A549 (cell line): ENCODE measurements at regions of chr4 and their contacts with region 1.

Region 1: GRCh38 chr4:40897557-40898203 is 147.9 kb downstream of the NSUN7 start:
- DNase-seq: peak; percentile 71 to 79
- ATAC-seq: peak; percentile 79 to 94
- H3K4me3 ChIP-seq: peak overlapping the region; percentile 47
- H3K27ac ChIP-seq: peak overlapping the region; percentile 49 to 52
- H3K4me1 ChIP-seq: 0 out of 3 replicates have a peak, but pooled peaks cover 4% of the 10 kb centered on the region
- CTCF ChIP-seq: peak; percentile 72
- EP300 ChIP-seq: no peak
- POLR2A ChIP-seq: no peak
- RAD21 ChIP-seq: peak; percentile 49 to 55; a peak in 4 of 5 replicates

Region 2: GRCh38 chr4:40736910-40737309 is 160.8 kb before region 1 on chr4:
- CTCF ChIA-PET with region 1: interaction called, 13 read pairs
- POLR2A ChIA-PET with region 1: interaction called, 3 read pairs
- DNase-seq: peak; percentile 22 to 42
- ATAC-seq: peak; percentile 50 to 63; a peak in 2 of 6 replicates
- H3K4me3 ChIP-seq: no peak overlapping the region
- H3K27ac ChIP-seq: no peak overlapping the region
- H3K4me1 ChIP-seq: 0 out of 3 replicates have a peak, but pooled peaks cover under 1% of the 10 kb centered on the region
- CTCF ChIP-seq: peak; percentile 57
- EP300 ChIP-seq: no peak
- POLR2A ChIP-seq: no peak
- RAD21 ChIP-seq: peak; percentile 65 to 68

Region 3: DNA sequence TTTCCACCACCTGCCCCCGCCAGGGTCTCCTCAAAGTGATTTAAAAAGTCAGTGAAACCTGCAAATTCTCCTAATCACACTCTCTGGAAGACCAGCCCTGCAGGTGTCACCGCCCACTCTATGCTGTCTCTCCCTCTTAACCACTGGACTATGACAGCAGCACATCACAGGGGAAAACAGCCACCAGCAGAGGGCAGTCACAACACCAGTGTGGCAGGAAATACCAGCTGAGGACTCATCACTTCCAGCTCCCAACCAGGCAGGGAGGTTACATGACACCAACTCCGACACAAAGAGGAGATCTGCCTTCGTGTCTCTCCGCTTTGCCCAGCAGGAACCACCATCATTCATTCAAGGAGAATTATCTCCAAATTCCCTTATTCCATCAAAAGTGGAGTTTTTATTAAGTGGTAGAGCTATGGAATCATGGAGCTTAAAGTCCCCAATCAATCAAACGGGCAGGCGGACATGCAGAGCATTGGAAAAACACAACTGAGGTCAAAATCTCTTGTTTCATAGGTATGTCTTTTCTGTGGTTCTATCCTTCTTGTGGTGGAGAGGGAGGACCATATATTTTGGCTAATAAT is 56.6 kb before region 1 on chr4:
- CTCF ChIA-PET with region 1: interaction called, 20 read pairs
- POLR2A ChIA-PET with region 1: no interaction called
- DNase-seq: peak; percentile 33 to 78
- ATAC-seq: peak; percentile 93 to 97
- H3K4me3 ChIP-seq: no peak overlapping the region
- H3K27ac ChIP-seq: no peak overlapping the region
- H3K4me1 ChIP-seq: no peaks in the 10 kb centered on the region
- CTCF ChIP-seq: peak; percentile 59
- EP300 ChIP-seq: no peak
- POLR2A ChIP-seq: no peak
- RAD21 ChIP-seq: peak; percentile 33 to 41; a peak in 3 of 5 replicates

Region 4: GRCh38 chr4:40887288-40888131 is 10.2 kb before region 1 on chr4:
- CTCF ChIA-PET with region 1: interaction called, 13 read pairs
- POLR2A ChIA-PET with region 1: no interaction called
- DNase-seq: no peak
- ATAC-seq: no peak
- H3K4me3 ChIP-seq: no peak overlapping the region
- H3K27ac ChIP-seq: no peak overlapping the region
- H3K4me1 ChIP-seq: no peaks in the 10 kb centered on the region
- CTCF ChIP-seq: no peak
- EP300 ChIP-seq: no peak
- POLR2A ChIP-seq: no peak
- RAD21 ChIP-seq: no peak

Region 5: GRCh38 chr4:40908702-40909362 is 11.2 kb after region 1 on chr4:
- CTCF ChIA-PET with region 1: interaction called, 23 read pairs
- POLR2A ChIA-PET with region 1: no interaction called
- DNase-seq: peak; percentile 75 to 79
- ATAC-seq: peak; percentile 98 to 99
- H3K4me3 ChIP-seq: no peak overlapping the region
- H3K27ac ChIP-seq: peak overlapping the region in 1 of 2 experiments; percentile 63; a peak in 2 of 6 replicates
- H3K4me1 ChIP-seq: peaks cover 9% of the 10 kb centered on the region; the same call in 2 of the 3 replicates
- CTCF ChIP-seq: peak; percentile 83
- EP300 ChIP-seq: no peak
- POLR2A ChIP-seq: no peak
- RAD21 ChIP-seq: peak; percentile 69 to 74

Region 6: DNA sequence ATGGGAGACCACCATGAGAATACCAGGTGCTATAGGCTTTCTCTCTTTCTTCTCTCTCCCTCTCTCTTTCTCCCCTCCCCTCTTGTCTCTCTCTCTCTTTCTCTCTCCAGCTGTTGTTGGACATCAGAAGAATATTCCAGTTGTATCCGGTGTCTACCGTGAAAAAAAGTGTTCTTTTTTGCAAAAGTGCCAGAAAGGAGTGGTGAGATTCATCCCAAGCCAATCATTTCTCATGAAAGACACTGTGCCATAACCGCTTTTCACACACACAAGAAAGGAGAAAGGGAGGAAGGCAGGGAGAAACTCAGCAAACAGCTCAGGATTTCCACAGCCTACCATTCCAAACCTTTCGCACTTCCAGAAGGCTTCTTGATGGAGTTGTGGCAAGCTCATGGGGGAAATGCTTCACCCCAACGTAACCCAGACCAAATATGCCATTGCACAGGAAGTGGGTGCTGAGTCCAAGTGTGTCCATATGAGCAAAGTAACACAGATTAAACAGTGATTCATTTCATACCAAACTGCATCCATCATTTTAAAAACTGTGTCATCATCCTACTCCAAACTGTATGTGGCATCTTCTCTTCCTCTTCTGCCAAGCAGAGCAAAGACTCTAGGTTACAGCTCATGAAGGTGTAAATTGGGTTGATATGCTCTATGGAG is 92.7 kb after region 1 on chr4:
- CTCF ChIA-PET with region 1: no interaction called
- POLR2A ChIA-PET with region 1: no interaction called
- DNase-seq: peak; percentile 55 to 89
- ATAC-seq: peak; percentile 87 to 92
- H3K4me3 ChIP-seq: no peak overlapping the region
- H3K27ac ChIP-seq: peak overlapping the region; percentile 78 to 89
- H3K4me1 ChIP-seq: peaks cover 63% of the 10 kb centered on the region
- CTCF ChIP-seq: no peak
- EP300 ChIP-seq: peak; percentile 43 to 54; a peak in 2 of 5 replicates
- POLR2A ChIP-seq: no peak
- RAD21 ChIP-seq: peak in 1 of 2 experiments; percentile 20; a peak in 1 of 5 replicates